Sigmoid colon (tissue), 7 donors: ENCODE measurements at regions of chr10 and their contacts with region 1.

Region 1: DNA sequence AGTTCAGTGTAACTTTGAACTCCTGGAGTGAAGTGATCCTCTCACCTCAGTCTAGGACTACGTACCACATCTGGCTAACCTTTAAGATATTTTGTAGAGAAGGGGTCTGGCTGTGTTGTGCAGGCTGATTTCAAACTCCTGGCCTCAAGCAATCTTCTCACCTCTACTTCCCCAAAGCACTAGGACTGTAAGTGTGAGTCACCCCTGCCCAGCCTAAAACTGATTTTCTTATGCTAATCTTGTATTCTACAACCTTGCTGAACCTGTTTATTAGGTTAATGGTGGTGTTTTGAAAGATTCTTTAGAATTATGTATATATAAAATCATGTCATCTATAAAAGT is 58.0 kb downstream of the LCOR start:
- DNase-seq: no peak
- H3K4me3 ChIP-seq: no peak overlapping the region
- H3K27ac ChIP-seq: no peak overlapping the region
- H3K4me1 ChIP-seq: peaks cover 0 to 14% (median 9%) of the 10 kb centered on the region in 4 donors
- H3K27me3 ChIP-seq: no peaks in the 10 kb centered on the region
- CTCF ChIP-seq: no peak
- EP300 ChIP-seq: no peak
- POLR2A ChIP-seq: no peak

Region 2: GRCh38 chr10:96858706-96859050 is 31.5 kb before region 1 on chr10:
- intact Hi-C with region 1: loop called (anchors 1 kb)
- DNase-seq: no peak
- H3K4me3 ChIP-seq: no peak overlapping the region
- H3K27ac ChIP-seq: no peak overlapping the region
- H3K4me1 ChIP-seq: peaks cover 0 to 37% (median 30%) of the 10 kb centered on the region in 4 donors
- H3K27me3 ChIP-seq: no peaks in the 10 kb centered on the region
- CTCF ChIP-seq: no peak
- EP300 ChIP-seq: no peak
- POLR2A ChIP-seq: no peak